Dendritic cell treated with granulocyte-macrophage colony-stimulating factor and Interleukin-4, amounts not matched to agents 40 ng/mL and 50 ng/mL, for 4 days (primary cell): ENCODE measurements at regions of chr12 and their contacts with region 1.

Region 1: GRCh38 chr12:50222275-50222795 is 55.2 kb upstream of the CERS5 start:
- H3K4me3 Mint-ChIP-seq: no peak overlapping the region
- H3K27ac Mint-ChIP-seq: no peak overlapping the region
- H3K4me1 Mint-ChIP-seq: peaks cover 5% of the 10 kb centered on the region
- H3K27me3 Mint-ChIP-seq: no peaks in the 10 kb centered on the region

Region 2: GRCh38 chr12:50242751-50243191 is 20.4 kb after region 1 on chr12:
- intact Hi-C with region 1: loop called (anchors 1 kb)
- H3K4me3 Mint-ChIP-seq: no peak overlapping the region
- H3K27ac Mint-ChIP-seq: no peak overlapping the region
- H3K4me1 Mint-ChIP-seq: peaks cover 50% of the 10 kb centered on the region
- H3K27me3 Mint-ChIP-seq: peaks cover 10% of the 10 kb centered on the region

Region 3: DNA sequence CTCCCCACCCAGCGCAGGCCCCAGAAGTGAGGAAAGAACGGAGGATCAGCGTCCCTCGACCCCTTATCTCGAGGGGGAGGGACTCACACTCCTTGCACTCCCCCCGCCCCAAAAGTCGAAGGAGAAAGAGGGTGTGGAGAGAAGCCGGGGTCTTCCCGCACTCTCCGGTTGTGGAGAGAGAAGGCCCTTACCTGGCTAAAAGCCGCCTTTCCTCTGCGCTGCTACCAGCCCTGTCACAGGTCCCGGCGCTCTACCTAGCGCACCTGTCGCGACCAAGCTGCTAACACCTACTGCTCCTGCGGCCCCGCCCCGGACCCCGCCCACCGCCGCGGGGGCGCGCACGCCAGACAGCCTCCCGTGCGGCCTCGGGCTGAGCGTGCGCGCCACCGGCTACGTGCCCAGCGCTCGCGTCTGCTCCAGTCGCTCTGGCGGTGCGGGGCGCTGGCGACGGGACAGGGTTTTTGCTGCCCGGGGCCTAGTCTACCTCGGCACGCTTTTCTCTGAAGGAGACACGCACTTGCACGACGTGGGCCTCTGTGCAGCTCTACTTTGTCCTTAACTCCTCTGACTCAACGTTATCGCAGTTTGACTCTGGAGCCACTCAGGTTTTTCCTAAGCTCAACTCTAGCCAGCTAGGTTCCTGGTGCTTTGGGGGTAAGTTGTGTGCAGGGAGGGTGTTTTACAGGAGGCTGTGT is 61.0 kb after region 1 on chr12 and contains the start of gene LIMA1:
- intact Hi-C with region 1: loop called (anchors 10 kb)
- H3K4me3 Mint-ChIP-seq: peak within 1 kb of the TSS; percentile 87
- H3K27ac Mint-ChIP-seq: peak within 1 kb of the TSS; percentile 86
- H3K4me1 Mint-ChIP-seq: peaks cover 17% of the 10 kb centered on the region
- H3K27me3 Mint-ChIP-seq: peaks cover 14% of the 10 kb centered on the region

Region 4: DNA sequence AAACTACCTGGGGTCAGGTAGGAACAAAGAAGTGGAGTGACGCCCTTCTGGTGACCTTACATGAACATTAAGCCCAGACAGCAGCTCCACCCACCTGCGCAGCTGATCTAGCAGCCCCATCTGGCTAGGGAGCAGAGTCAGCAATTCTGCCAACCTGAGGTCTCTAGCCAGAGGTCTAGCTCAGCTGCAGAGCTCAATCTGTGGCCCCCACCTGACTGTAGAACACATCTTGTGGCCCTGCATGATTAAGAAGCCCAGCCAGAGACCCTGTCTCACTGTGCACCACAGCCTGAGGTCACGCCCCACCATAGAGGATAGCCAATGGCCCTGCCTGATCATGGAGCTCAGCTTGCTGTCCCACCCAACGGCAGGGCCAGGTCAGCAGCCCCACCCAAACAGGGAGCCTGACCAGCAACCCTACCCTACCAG is 679.4 kb after region 1 on chr12:
- intact Hi-C with region 1: no loop called
- H3K4me3 Mint-ChIP-seq: no peak overlapping the region
- H3K27ac Mint-ChIP-seq: no peak overlapping the region
- H3K4me1 Mint-ChIP-seq: no peaks in the 10 kb centered on the region
- H3K27me3 Mint-ChIP-seq: no peaks in the 10 kb centered on the region